GM10248 (cell line): ENCODE measurements at regions of chr11 and their contacts with region 1.

Region 1: GRCh38 chr11:16923987-16924386 is 90.2 kb downstream of the PLEKHA7 start:
- DNase-seq: peak; percentile 45
- CTCF ChIP-seq: no peak

Region 2: DNA sequence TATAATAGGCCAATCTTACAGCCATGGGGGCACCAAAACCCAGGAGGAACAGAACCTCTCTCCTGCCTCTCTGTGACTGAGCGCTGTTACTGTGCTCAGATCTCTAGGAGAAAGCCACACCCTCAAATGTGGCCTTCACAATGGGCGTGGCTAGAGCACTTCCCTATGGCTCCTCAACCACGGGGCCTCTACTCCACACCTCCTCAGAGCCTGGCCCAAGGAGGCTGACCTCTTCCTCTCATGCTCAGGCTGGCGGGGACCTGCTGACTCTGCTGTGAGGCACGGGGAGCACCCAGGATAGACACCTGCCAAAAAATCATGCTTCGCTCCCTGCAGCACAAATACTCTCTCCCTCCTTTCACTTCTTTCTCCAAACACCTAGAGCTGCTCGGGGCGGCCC is 144.6 kb before region 1 on chr11:
- CTCF ChIA-PET with region 1: no interaction called
- POLR2A ChIA-PET with region 1: no interaction called
- DNase-seq: no peak
- CTCF ChIP-seq: no peak

Region 3: GRCh38 chr11:16935518-16936302 is 11.7 kb after region 1 on chr11:
- CTCF ChIA-PET with region 1: interaction called, 17 read pairs
- POLR2A ChIA-PET with region 1: no interaction called
- DNase-seq: peak; percentile 51
- CTCF ChIP-seq: peak; percentile 76